MCF 10A (cell line): ENCODE measurements at regions of chr12 and their contacts with region 1.

Region 1: GRCh38 chr12:82685790-82686167 is 927 bp upstream of the TMTC2 start:
- DNase-seq: peak; percentile 96
- H3K4me3 Mint-ChIP-seq: peak overlapping the region; percentile 85
- H3K27ac Mint-ChIP-seq: no peak overlapping the region
- H3K4me1 Mint-ChIP-seq: peaks cover 16% of the 10 kb centered on the region
- H3K27me3 Mint-ChIP-seq: no peaks in the 10 kb centered on the region
- CTCF ChIP-seq: peak; percentile 77

Region 2: DNA sequence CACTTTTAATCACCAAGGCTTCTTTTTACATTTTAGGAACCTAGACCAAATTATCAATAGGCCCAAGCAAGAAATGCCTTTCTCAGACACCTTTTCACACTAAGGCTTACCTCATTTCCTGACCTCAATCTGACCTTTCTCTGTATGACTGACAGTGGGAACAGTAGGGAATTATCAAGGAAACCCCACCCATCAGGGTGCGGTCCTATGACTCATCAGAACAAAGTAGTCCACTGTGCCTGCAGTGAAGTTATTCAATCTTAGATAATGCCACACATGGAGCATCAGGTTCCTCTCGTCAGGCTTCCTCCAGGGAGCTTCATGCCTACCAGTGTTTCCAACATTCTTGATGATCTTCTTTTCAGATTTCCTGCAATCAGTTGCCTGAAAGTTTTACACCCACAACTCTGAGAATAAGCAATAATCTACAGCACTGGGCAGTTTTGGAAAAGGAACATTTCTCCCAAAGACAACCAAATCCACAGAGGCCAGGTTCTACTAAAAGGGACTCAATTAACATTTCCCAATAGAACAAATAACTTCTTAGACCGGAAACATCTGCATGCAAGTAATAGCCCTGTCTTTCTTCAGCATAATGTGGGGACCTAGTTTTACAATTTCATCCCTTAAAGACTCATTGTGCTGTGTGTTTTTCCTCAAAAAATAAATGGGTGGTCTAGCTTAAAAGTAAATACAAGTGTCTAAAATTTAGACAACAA is 35.0 kb before region 1 on chr12:
- CTCF ChIA-PET with region 1: interaction called, 12 read pairs
- POLR2A ChIA-PET with region 1: interaction called, 7 read pairs
- intact Hi-C with region 1: no loop called
- DNase-seq: peak; percentile 94
- H3K4me3 Mint-ChIP-seq: no peak overlapping the region
- H3K27ac Mint-ChIP-seq: peak overlapping the region; percentile 12
- H3K4me1 Mint-ChIP-seq: peaks cover 20% of the 10 kb centered on the region
- H3K27me3 Mint-ChIP-seq: no peaks in the 10 kb centered on the region
- CTCF ChIP-seq: no peak

Region 3: GRCh38 chr12:82805812-82806497 is 120.2 kb after region 1 on chr12:
- CTCF ChIA-PET with region 1: interaction called, 11 read pairs
- POLR2A ChIA-PET with region 1: no interaction called
- intact Hi-C with region 1: no loop called
- DNase-seq: no peak
- H3K4me3 Mint-ChIP-seq: no peak overlapping the region
- H3K27ac Mint-ChIP-seq: no peak overlapping the region
- H3K4me1 Mint-ChIP-seq: peaks cover 6% of the 10 kb centered on the region
- H3K27me3 Mint-ChIP-seq: no peaks in the 10 kb centered on the region
- CTCF ChIP-seq: no peak

Region 4: DNA sequence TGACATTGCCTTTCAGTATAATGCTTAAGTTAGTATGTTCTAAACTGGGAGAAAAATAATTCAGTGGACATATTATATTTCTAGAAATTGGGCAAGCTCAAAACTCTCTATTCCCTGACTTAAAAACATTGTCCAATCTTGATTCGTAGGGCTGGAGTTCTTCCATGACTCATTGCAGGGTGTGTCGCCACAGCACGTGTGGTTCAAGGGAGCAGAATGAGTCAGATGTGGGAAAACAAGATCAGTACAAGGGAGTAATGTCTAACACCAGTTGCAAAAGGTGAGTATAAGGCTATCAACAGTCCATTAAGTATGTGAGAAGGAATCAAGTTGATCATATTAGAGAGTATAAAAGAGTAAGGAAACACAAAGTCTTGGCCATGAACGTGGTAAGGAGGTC is 887.9 kb after region 1 on chr12:
- CTCF ChIA-PET with region 1: no interaction called
- POLR2A ChIA-PET with region 1: interaction called, 3 read pairs
- intact Hi-C with region 1: loop called (anchors 5 kb)
- DNase-seq: peak; percentile 96
- H3K4me3 Mint-ChIP-seq: no peak overlapping the region
- H3K27ac Mint-ChIP-seq: peak overlapping the region; percentile 89
- H3K4me1 Mint-ChIP-seq: peaks cover 14% of the 10 kb centered on the region
- H3K27me3 Mint-ChIP-seq: no peaks in the 10 kb centered on the region
- CTCF ChIP-seq: no peak

Region 5: GRCh38 chr12:84502907-84503787 is 1817.4 kb after region 1 on chr12:
- CTCF ChIA-PET with region 1: interaction called, 3 read pairs
- POLR2A ChIA-PET with region 1: no interaction called
- intact Hi-C with region 1: loop called (anchors 1 kb)
- DNase-seq: peak; percentile 76
- H3K4me3 Mint-ChIP-seq: no peak overlapping the region
- H3K27ac Mint-ChIP-seq: no peak overlapping the region
- H3K4me1 Mint-ChIP-seq: peaks cover 23% of the 10 kb centered on the region
- H3K27me3 Mint-ChIP-seq: no peaks in the 10 kb centered on the region
- CTCF ChIP-seq: peak; percentile 51